AG04449 (cell line): ENCODE measurements at regions of chr12 and their contacts with region 1.

Region 1: DNA sequence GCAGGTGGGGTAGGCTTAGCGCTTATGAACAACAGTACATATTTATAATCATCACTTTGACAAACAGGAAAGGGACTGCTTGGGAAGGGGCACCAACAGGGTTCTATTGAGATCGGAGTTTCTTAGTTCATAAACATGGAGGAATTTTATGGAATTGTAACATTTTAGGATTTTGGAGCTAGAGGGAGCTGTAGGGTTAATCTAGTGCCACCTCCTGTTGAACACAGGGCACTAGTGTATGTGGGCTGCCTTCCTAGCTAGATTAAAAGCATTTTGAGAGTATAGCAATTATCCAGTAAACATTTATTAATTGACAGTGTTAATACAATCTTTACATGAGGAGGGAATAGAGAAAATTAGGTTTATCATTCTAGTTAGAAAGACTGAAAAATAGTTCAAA is 23.1 kb upstream of the TBC1D30 start:
- DNase-seq: no peak
- H3K4me3 ChIP-seq: no peak overlapping the region
- CTCF ChIP-seq: peak; percentile 27

Region 2: GRCh38 chr12:64510667-64511066 is 290.7 kb before region 1 on chr12:
- CTCF ChIA-PET with region 1: no interaction called
- POLR2A ChIA-PET with region 1: no interaction called
- DNase-seq: no peak
- H3K4me3 ChIP-seq: no peak overlapping the region
- CTCF ChIP-seq: no peak

Region 3: GRCh38 chr12:64752833-64753238 is 48.5 kb before region 1 on chr12:
- CTCF ChIA-PET with region 1: no interaction called
- POLR2A ChIA-PET with region 1: no interaction called
- DNase-seq: no peak
- H3K4me3 ChIP-seq: no peak overlapping the region
- CTCF ChIP-seq: no peak

Region 4: DNA sequence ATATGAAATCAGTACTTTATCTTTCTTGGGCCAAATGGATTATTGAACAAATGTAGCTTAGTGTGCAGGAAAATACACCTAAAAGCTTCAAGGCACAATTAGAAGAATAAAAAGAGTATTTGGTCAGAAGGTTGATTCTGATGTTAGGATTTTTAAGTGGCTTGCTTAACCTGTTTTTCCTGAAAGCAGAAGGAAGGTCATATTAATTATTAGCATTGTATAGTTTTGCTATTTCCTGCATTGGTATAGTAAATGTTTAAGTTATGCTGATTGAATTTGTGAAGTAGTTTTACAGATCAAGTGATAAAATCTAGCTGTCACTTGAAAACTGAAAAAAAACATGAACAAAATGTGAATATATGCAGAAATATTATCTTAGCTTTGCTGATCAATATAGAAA is 11.2 kb before region 1 on chr12:
- CTCF ChIA-PET with region 1: interaction called, 46 read pairs
- POLR2A ChIA-PET with region 1: no interaction called
- DNase-seq: no peak
- H3K4me3 ChIP-seq: no peak overlapping the region
- CTCF ChIP-seq: no peak

Region 5: DNA sequence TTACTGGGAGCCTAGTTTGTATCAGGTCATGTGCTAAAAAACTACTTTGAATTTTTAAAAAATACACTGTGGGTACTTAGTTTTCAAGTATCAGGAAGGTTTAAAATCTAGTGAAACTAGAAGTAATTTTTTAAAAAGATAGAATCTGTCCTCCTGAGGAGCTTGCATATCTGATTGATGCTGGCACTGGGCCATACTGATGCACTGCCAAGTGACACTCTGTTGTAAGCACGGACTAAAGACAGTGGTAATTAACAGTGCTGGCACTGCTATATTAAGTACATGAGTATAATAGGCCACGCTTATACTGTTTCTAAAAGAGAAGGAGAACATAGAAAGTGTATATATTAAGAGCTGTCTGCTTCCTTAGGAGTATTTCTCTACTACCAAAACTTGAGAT is 13.1 kb after region 1 on chr12:
- CTCF ChIA-PET with region 1: interaction called, 46 read pairs
- POLR2A ChIA-PET with region 1: no interaction called
- DNase-seq: no peak
- H3K4me3 ChIP-seq: no peak overlapping the region
- CTCF ChIP-seq: no peak

Region 6: DNA sequence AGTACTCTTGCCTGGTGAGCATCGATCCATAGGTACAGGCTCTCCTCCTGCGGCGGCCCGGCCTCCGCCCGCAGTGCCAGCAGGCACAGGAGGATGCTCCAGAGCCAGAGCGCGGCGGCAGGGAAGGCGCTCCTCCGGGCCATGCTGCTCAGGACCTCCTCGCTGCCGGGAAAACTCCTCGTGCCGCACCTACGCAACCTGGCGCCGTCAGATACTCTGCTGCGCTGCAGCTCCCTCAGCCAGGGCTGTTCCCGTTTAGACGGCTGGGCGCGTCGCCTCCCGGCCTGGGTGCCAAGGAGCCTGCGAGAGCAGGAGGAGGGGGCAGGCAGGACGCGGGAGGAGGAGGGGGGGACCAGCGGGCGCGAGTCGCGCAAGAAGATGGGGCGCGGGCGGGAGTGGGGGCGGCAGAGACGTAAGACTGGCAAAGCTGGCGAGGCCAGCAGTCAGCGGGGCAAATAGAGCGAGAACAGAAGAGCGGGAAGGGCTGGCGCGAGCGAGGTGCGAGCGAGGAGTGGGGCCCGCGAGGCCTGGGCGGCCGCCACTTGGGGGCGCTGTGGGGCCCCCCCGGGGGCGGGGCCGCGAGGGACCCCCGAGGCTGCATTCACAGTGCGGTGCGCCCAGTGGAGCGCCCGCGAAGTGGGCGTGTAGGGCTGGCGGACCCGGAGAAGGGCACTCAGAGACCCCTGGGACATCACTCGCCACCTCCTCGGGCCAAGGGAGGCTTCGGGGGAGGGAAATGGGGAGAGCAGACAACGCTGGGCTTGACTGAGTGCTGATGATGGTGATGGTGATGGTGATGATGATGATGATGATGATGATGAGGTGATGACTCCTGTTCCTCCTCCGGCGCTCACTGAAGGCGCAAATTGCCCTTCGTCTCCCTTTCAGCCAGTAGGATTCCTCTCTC is 319.9 kb after region 1 on chr12 and contains the start of gene WIF1:
- CTCF ChIA-PET with region 1: interaction called, 10 read pairs
- POLR2A ChIA-PET with region 1: no interaction called
- DNase-seq: no peak
- H3K4me3 ChIP-seq: peak within 1 kb of the TSS; percentile 36
- CTCF ChIP-seq: peak; percentile 17